ENCODE measurements at regions of chr16 and their contacts with region 1.

Region 1: DNA sequence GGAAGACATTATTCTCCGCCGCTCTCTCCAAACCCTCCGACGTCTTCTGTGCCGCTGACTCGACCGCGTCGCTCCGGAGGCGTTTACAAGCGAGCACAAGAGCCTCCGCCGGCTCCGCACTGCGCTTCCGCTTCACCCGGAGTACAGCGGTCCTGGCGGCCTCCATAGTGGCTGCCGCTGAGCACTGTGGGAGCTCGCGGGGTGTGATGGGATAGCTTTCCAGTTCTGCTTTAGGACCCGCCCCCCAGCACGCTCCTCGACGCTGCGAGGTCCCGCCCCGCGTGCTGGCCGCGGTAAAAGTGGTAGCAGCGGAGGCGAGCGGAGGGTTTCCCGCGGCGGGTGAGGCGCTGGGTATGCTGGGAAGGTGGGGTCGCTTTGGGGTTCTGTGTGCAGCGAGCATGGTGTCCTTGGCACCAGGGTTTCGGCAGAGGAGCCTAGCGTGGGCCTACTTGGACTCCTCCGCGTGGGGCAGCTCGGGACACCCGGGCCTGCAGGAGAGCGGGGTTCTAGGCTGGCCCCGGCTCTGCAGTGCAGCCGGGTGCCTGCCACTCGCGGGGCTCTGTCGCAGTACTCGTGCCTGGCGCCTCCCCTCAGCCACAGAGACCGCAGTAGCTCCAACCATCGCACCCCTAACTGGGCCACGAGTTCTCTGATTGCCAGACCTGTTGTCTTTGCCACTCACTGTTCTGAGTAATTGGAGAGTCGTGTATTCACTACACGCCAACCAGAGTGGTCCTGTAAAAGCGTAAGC is at the starts of genes PRMT7 and SLC7A6OS:
- DNase-seq: peak; percentile 67 to 93
- H3K4me3 ChIP-seq: peak within 1 kb of the TSS; percentile 69 to 96 (median 86)
- H3K27ac ChIP-seq: peak within 1 kb of the TSS; percentile 87
- H3K4me1 ChIP-seq: peaks cover 3 to 6% (median 4%) of the 10 kb centered on the region in 4 experiments; a peak in 5 of 7 replicates
- H3K27me3 ChIP-seq: no peaks in the 10 kb centered on the region
- CTCF ChIP-seq: peak in 2 of 3 experiments; percentile 14 to 24; a peak in 2 of 4 replicates
- EP300 ChIP-seq: no peak
- POLR2A ChIP-seq: peak; percentile 58 to 95
- RAD21 ChIP-seq: peak in 1 of 2 experiments; percentile 22; a peak in 1 of 4 replicates
- total RNA-seq, gene PRMT7: 48.2 and 48.7 TPM in 2 replicates
- total RNA-seq, gene SLC7A6OS: 16.4 and 21.3 TPM in 2 replicates

Region 2: GRCh38 chr16:68244903-68245853 is 65.8 kb before region 1 on chr16 and contains the start of gene PLA2G15:
- CTCF ChIA-PET with region 1: interaction called, 4 read pairs
- POLR2A ChIA-PET with region 1: interaction called, 12 read pairs
- DNase-seq: peak; percentile 70 to 98
- H3K4me3 ChIP-seq: peak within 1 kb of the TSS; percentile 86 to 94 (median 90)
- H3K27ac ChIP-seq: no peak within 1 kb of the TSS
- H3K4me1 ChIP-seq: peaks cover 0 to 5% (median 3%) of the 10 kb centered on the region in 4 experiments; a peak in 5 of 7 replicates
- H3K27me3 ChIP-seq: peaks cover 0 to 8% (median 5%) of the 10 kb centered on the region in 4 experiments; a peak in 5 of 7 replicates
- CTCF ChIP-seq: no peak
- EP300 ChIP-seq: no peak
- POLR2A ChIP-seq: peak in 1 of 2 experiments; percentile 34; a peak in 1 of 3 replicates
- RAD21 ChIP-seq: no peak
- total RNA-seq, gene PLA2G15: 10.0 and 11.2 TPM in 2 replicates

Region 3: GRCh38 chr16:68270353-68270752 is 40.6 kb before region 1 on chr16:
- CTCF ChIA-PET with region 1: interaction called, 221 read pairs
- POLR2A ChIA-PET with region 1: interaction called, 22 read pairs
- DNase-seq: no peak
- H3K4me3 ChIP-seq: no peak overlapping the region
- H3K27ac ChIP-seq: no peak overlapping the region
- H3K4me1 ChIP-seq: peaks cover 0 to 3% (median 2%) of the 10 kb centered on the region in 4 experiments; a peak in 4 of 7 replicates
- H3K27me3 ChIP-seq: peaks cover 0 to under 1% (median 0%) of the 10 kb centered on the region in 4 experiments; a peak in 1 of 7 replicates
- CTCF ChIP-seq: no peak
- EP300 ChIP-seq: no peak
- POLR2A ChIP-seq: no peak
- RAD21 ChIP-seq: no peak

Region 4: DNA sequence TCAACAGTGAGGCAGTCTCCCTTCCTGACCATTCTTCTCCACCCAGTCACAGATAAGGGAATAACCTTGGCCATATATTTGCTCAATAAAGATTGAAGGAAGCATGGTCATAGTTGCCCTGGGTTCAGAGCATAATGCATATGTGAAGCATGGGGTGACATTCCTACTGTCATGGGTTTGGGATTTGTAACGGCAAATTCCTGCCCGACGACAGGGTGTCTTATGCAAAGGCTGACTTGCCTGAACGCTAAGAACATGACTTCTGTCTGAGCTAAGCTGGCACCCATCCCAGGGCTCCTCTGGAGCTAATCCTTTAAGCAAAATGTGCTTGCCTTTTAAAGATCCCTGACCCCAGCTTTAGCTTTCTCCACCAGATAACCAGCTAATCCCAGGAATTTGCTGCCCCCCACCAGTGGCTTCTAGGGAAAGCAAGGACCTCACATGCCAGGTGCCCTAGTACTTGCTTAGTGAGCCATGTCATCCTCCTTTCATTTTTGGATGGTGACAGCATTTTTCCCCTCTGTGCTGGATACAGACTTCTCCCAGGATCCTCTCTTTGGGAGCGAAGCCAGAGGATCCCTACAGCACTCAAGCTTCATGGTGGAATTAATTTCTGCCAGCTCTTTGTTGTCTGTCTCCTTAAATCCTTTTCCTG is 11.9 kb before region 1 on chr16:
- CTCF ChIA-PET with region 1: interaction called, 8 read pairs
- POLR2A ChIA-PET with region 1: interaction called, 35 read pairs
- DNase-seq: no peak
- H3K4me3 ChIP-seq: no peak overlapping the region
- H3K27ac ChIP-seq: no peak overlapping the region
- H3K4me1 ChIP-seq: no peaks in the 10 kb centered on the region
- H3K27me3 ChIP-seq: no peaks in the 10 kb centered on the region
- CTCF ChIP-seq: no peak
- EP300 ChIP-seq: no peak
- POLR2A ChIP-seq: no peak
- RAD21 ChIP-seq: no peak

Region 5: DNA sequence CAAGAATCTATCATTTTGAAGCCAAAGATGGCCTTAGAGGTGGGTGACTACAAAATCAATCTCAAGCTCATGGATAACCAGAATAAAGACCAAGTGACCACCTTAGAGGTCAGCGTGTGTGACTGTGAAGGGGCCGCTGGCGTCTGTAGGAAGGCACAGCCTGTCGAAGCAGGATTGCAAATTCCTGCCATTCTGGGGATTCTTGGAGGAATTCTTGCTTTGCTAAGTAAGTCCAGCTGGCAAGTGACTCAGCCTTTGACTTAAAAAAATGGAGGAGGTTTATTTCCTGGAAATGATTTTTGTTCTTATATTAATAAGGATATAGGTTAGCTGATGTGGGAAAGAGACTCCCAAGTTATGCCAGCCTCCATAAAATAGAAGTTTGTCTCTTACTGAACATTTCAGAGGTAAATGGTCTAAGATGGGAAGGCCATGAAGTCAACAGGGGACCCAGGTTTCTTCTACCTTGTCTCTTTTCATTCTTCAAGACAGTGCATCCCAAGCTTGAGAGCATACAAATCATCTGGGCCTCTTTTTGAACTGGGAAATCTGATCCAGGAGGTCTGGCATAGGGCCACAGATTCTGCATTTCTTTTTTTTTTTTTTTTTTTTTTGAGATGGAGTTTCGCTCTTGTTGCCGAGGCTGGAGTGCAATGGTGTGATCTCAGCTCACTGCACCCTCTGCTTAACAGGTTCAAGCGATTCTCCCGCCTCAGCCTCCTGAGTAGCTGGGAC is 512.6 kb after region 1 on chr16:
- CTCF ChIA-PET with region 1: no interaction called
- POLR2A ChIA-PET with region 1: no interaction called
- DNase-seq: no peak
- H3K4me3 ChIP-seq: no peak overlapping the region
- H3K27ac ChIP-seq: no peak overlapping the region
- H3K4me1 ChIP-seq: no peaks in the 10 kb centered on the region
- H3K27me3 ChIP-seq: no peaks in the 10 kb centered on the region
- CTCF ChIP-seq: no peak
- EP300 ChIP-seq: no peak
- POLR2A ChIP-seq: no peak
- RAD21 ChIP-seq: no peak